ENCODE measurements at regions of chr3 and their contacts with region 1.

Region 1: GRCh38 chr3:13452490-13453335 is 27.4 kb upstream of the HDAC11 start:
- DNase-seq: peak; percentile 61
- CTCF ChIP-seq: peak; percentile 73

Region 2: GRCh38 chr3:13106308-13107001 is 346.3 kb before region 1 on chr3:
- in situ Hi-C with region 1: loop called (anchors 10 kb)
- DNase-seq: no peak
- CTCF ChIP-seq: no peak

Measured in GM13977 (cell line).